CD8-positive, alpha-beta T cell (primary cell): ENCODE measurements at regions of chr6 and their contacts with region 1.

Region 1: GRCh38 chr6:142935553-142936517 is 9.1 kb downstream of the HIVEP2 start:
- DNase-seq: peak in 5 of 9 experiments; percentile 28 to 79 (median 45)
- ATAC-seq: peak; percentile 60
- H3K4me3 ChIP-seq: peak overlapping the region in 1 of 2 experiments; percentile 35
- H3K4me3 Mint-ChIP-seq: peak overlapping the region; percentile 84
- H3K27ac ChIP-seq: peak overlapping the region in 1 of 2 experiments; percentile 67
- H3K27ac Mint-ChIP-seq: peak overlapping the region; percentile 93
- H3K4me1 ChIP-seq: peaks cover 86% of the 10 kb centered on the region
- H3K4me1 Mint-ChIP-seq: peaks cover 93% of the 10 kb centered on the region
- H3K27me3 ChIP-seq: no peaks in the 10 kb centered on the region
- H3K27me3 Mint-ChIP-seq: no peaks in the 10 kb centered on the region
- CTCF ChIP-seq: no peak

Region 2: GRCh38 chr6:142551274-142551811 is 384.5 kb before region 1 on chr6:
- CTCF ChIA-PET with region 1: no interaction called
- POLR2A ChIA-PET with region 1: no interaction called
- intact Hi-C with region 1: loop called in 1 of 2 experiments (anchors 2 kb)
- DNase-seq: peak; percentile 1 to 70 (median 41)
- ATAC-seq: peak; percentile 99
- H3K4me3 ChIP-seq: no peak overlapping the region
- H3K4me3 Mint-ChIP-seq: peak overlapping the region; percentile 0
- H3K27ac ChIP-seq: no peak overlapping the region
- H3K27ac Mint-ChIP-seq: no peak overlapping the region
- H3K4me1 ChIP-seq: peaks cover 29% of the 10 kb centered on the region
- H3K4me1 Mint-ChIP-seq: peaks cover 26% of the 10 kb centered on the region
- H3K27me3 ChIP-seq: no peaks in the 10 kb centered on the region
- H3K27me3 Mint-ChIP-seq: peaks cover 3% of the 10 kb centered on the region
- CTCF ChIP-seq: no peak